ENCODE measurements at regions of chr1 and their contacts with region 1.

Region 1: DNA sequence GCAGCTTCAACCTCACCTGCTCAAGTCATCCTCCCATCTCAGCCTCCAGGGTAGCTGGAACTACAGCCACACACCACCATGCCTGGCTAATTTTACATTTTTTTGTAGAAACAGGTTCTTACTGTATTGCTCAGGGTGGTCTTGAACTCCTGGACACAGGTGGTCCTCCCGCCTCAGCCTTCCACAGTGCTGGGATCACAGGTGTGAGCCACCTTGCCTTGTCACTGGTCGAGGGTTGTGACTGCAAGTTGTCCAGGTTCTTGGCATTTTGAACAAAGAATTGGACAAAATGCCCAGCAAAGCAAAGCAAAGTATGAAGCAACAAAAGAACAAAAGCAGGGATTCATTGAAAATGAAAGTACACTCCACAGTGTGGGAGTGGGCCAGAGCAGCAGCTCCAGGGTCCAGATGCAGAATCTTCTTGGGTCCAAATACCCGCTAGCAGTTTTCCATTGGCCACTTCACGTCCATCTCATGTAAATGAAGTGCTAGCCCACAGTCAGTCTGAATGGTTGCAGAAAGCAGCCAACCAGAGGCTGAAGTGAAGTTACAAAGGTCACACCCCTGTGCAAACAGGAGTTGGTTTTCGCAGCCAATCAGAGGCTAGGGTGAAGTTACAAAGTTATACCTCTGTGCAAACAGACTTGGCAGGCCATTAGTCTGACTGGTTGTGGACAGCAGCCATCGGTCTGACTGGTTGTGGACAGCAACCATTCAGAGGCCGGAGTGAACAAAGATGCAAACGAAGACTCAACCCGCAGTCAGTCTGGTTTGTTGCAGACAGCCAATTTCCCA is 109.5 kb upstream of the KIF26B start:
- DNase-seq: peak in 2 of 3 donors; percentile 35 to 83
- ATAC-seq: peak; percentile 96
- H3K4me3 ChIP-seq: no peak overlapping the region
- H3K4me1 ChIP-seq: peaks cover 5% of the 10 kb centered on the region
- CTCF ChIP-seq: no peak

Region 2: DNA sequence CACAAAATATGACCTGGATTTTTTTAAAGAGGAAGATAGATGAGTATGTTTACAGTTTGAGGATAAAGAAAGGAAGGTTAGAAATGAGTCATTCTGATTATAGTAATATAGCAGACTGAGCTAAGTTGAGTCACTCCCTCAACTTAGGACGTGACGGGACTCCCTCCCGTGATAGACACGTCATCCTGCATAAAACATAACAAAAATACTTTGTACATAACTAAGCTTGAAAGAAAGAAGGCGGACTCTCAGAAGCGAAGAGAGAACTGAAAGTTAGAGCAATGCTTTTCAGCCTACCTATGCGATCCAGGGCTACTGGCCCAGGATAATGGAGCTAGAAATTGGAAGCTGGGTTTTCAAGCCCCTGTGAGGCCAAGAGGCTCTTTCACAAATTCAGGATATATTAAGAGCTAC is 445.3 kb before region 1 on chr1:
- intact Hi-C with region 1: loop called in 1 of 2 experiments (anchors 10 kb)
- DNase-seq: peak in 1 of 3 donors; percentile 12
- ATAC-seq: peak; percentile 92
- H3K4me3 ChIP-seq: no peak overlapping the region
- H3K4me1 ChIP-seq: no peaks in the 10 kb centered on the region
- CTCF ChIP-seq: no peak

Region 3: GRCh38 chr1:244864253-244865027 is 180.8 kb before region 1 on chr1 and contains the start of gene HNRNPU:
- intact Hi-C with region 1: loop called in 1 of 2 experiments (anchors 10 kb)
- DNase-seq: peak; percentile 98 to 99 (median 98)
- ATAC-seq: peak; percentile 90
- H3K4me3 ChIP-seq: peak within 1 kb of the TSS; percentile 100
- H3K4me1 ChIP-seq: peaks cover 26% of the 10 kb centered on the region
- CTCF ChIP-seq: no peak
- total RNA-seq, gene HNRNPU: 197 to 281 (median 260) TPM

Region 4: GRCh38 chr1:245258271-245258920 is 213.1 kb after region 1 on chr1:
- intact Hi-C with region 1: no loop called
- DNase-seq: peak in 1 of 3 donors; percentile 63
- ATAC-seq: peak; percentile 81
- H3K4me3 ChIP-seq: no peak overlapping the region
- H3K4me1 ChIP-seq: peaks cover 7% of the 10 kb centered on the region
- CTCF ChIP-seq: no peak

Measured in mucosa of descending colon (tissue), 3 donors.